ENCODE measurements at regions of chr15 and their contacts with region 1.

Region 1: GRCh38 chr15:65530314-65531122 is at the start of gene HACD3:
- DNase-seq: peak; percentile 95
- ATAC-seq: peak; percentile 93
- H3K4me3 Mint-ChIP-seq: peak within 1 kb of the TSS; percentile 78
- H3K27ac Mint-ChIP-seq: peak within 1 kb of the TSS; percentile 91
- H3K4me1 Mint-ChIP-seq: peaks cover 32% of the 10 kb centered on the region
- H3K27me3 Mint-ChIP-seq: no peaks in the 10 kb centered on the region
- total RNA-seq, gene HACD3: 23.4 to 27.3 TPM

Region 2: GRCh38 chr15:65163041-65163440 is 367.5 kb before region 1 on chr15:
- CTCF ChIA-PET with region 1: no interaction called
- POLR2A ChIA-PET with region 1: no interaction called
- intact Hi-C with region 1: no loop called
- DNase-seq: no peak
- ATAC-seq: no peak
- H3K4me3 Mint-ChIP-seq: no peak overlapping the region
- H3K27ac Mint-ChIP-seq: no peak overlapping the region
- H3K4me1 Mint-ChIP-seq: no peaks in the 10 kb centered on the region
- H3K27me3 Mint-ChIP-seq: no peaks in the 10 kb centered on the region

Region 3: GRCh38 chr15:65460741-65461347 is 69.7 kb before region 1 on chr15:
- CTCF ChIA-PET with region 1: no interaction called
- POLR2A ChIA-PET with region 1: no interaction called
- intact Hi-C with region 1: loop called in 1 of 2 experiments (anchors 1 kb)
- DNase-seq: peak; percentile 72
- ATAC-seq: peak; percentile 99
- H3K4me3 Mint-ChIP-seq: no peak overlapping the region
- H3K27ac Mint-ChIP-seq: peak overlapping the region; percentile 12
- H3K4me1 Mint-ChIP-seq: peaks cover 10% of the 10 kb centered on the region
- H3K27me3 Mint-ChIP-seq: no peaks in the 10 kb centered on the region